Tibial artery (tissue), 4 donors: ENCODE measurements at regions of chr10 and their contacts with region 1.

Region 1: GRCh38 chr10:61903221-61903927 is 1.9 kb downstream of the ARID5B start:
- DNase-seq: peak; percentile 40 to 76
- H3K4me3 ChIP-seq: peak overlapping the region; percentile 70 to 89
- H3K27ac ChIP-seq: peak overlapping the region; percentile 97 to 98
- H3K4me1 ChIP-seq: peaks cover 0 to 33% (median 7%) of the 10 kb centered on the region in 4 donors
- H3K27me3 ChIP-seq: no peaks in the 10 kb centered on the region
- CTCF ChIP-seq: peak in 1 of 2 experiments; percentile 32

Region 2: GRCh38 chr10:61992671-61993668 is 89.6 kb after region 1 on chr10:
- intact Hi-C with region 1: loop called (anchors 10 kb)
- DNase-seq: peak; percentile 83 to 86
- H3K4me3 ChIP-seq: peak overlapping the region; percentile 25 to 36
- H3K27ac ChIP-seq: peak overlapping the region; percentile 66 to 69
- H3K4me1 ChIP-seq: peaks cover 0 to 69% (median 30%) of the 10 kb centered on the region in 4 donors
- H3K27me3 ChIP-seq: no peaks in the 10 kb centered on the region
- CTCF ChIP-seq: no peak

Region 3: DNA sequence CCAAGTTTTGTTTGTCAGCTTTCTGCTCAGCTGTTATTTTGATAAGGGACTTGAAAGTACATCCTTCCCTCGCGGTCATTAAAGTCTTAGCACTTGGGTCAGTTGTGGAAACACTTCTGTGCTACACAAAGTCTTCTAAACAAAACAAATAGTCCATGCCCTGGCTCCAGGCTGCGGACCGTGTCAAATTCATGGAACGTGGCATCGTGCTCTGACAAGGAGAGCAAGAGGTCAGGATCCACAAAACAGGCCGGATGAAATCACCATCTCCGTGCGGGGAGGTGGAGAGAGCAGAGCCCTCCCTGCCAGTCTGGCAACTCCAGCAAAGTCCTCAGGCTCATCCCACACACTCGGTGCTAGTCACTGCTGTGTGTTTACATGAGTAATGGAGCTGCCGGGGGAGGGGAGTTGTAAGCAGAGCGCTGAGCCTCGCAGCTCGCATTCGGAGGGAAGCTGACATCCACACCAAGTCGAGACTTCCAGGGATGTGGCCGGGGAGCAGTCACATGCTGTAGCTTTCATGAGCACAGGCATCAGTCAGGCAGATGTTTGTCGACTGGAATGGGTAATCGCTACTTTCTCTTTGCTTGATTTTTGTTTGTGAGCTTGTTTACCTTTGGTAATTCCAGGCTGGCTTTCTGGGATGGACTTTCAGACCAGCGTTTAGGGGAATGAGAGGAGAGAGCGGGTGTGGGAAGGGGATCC is 145.7 kb after region 1 on chr10:
- intact Hi-C with region 1: loop called (anchors 5 kb)
- DNase-seq: peak; percentile 94 to 95
- H3K4me3 ChIP-seq: peak overlapping the region; percentile 62 to 69
- H3K27ac ChIP-seq: peak overlapping the region; percentile 88 to 96
- H3K4me1 ChIP-seq: peaks cover 0 to 77% (median 60%) of the 10 kb centered on the region in 4 donors
- H3K27me3 ChIP-seq: no peaks in the 10 kb centered on the region
- CTCF ChIP-seq: no peak

Region 4: GRCh38 chr10:62082729-62083411 is 179.5 kb after region 1 on chr10:
- intact Hi-C with region 1: loop called (anchors 10 kb)
- DNase-seq: no peak
- H3K4me3 ChIP-seq: peak overlapping the region in 1 of 2 donors; percentile 14
- H3K27ac ChIP-seq: peak overlapping the region; percentile 73 to 81
- H3K4me1 ChIP-seq: peaks cover 0 to 86% (median 56%) of the 10 kb centered on the region in 4 donors
- H3K27me3 ChIP-seq: no peaks in the 10 kb centered on the region
- CTCF ChIP-seq: no peak

Region 5: GRCh38 chr10:63166742-63167258 is 1263.4 kb after region 1 on chr10:
- intact Hi-C with region 1: loop called (anchors 5 kb)
- DNase-seq: no peak
- H3K4me3 ChIP-seq: no peak overlapping the region
- H3K27ac ChIP-seq: peak overlapping the region in 1 of 2 donors; percentile 8
- H3K4me1 ChIP-seq: peaks cover 0 to 15% (median 3%) of the 10 kb centered on the region in 4 donors
- H3K27me3 ChIP-seq: no peaks in the 10 kb centered on the region
- CTCF ChIP-seq: peak; percentile 69 to 87